ENCODE measurements at regions of chr1 and their contacts with region 1.

Region 1: DNA sequence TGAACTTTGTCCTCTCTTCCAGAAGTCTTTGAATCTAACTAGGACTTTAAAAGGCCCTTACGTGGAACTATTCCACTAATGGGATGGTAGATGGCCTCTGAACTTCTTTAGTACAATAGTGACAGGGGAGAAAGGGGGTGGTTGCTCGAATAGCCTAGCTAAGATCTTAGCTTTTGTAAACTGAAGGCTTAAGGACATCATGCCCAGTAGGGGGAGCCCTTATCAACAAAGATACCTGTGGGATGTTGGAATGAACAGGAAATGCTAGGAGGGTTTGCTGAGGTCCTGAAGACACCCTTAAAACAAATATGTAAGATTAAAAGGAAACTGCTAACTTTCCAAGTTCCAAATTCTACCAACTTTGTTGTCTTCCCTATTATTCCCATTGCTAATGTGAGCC is 33.2 kb downstream of the NHLH2 start:
- DNase-seq: peak; percentile 86
- H3K4me3 Mint-ChIP-seq: no peak overlapping the region
- H3K27ac Mint-ChIP-seq: no peak overlapping the region
- H3K4me1 Mint-ChIP-seq: no peaks in the 10 kb centered on the region
- H3K27me3 Mint-ChIP-seq: peaks cover 13% of the 10 kb centered on the region

Region 2: DNA sequence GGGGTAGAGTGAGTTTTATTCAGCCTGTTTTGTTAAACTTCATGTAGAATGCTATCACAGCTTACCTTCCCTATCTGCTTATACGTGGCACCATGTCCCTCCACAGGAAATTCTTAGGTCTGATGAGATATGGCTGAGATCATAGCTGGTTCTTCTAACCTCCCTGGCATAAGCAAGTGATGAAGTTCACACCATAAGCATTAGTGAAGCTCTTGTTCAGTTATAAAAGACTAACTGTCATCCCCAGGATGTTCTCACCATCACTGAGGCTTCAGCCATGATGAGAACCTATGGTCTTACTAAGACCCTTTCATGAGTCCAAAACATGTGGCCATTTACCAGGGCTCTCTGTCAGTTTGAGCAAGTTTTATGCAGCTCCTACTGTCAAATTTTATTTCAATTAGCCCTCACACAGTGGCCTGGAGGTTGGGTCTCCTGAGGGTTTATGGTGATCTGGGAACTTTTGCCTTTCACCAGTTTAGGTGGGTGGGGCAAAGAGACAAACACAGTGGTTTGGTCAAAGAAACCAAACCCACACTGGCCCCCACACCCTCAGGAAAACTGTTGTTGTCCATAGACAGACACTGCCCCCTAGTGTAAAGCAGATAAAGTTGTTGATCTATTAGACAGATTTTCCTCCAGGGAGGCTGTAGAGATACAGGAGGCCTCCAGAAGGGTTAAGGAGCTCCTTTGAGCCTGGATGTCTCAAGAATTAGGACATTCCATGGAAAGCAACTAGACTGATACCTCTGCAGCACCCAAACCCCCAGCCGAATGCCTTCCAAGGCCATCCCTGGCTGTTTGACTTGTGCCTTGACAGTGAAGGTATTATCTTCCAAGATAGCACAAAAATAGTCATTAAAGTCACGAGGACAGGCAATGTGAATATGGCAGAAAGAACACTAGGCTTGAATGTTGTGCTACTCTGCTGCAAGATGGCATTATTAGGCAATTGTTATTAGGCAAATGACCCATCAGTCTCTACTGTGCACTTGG is 173.6 kb after region 1 on chr1:
- intact Hi-C with region 1: loop called (anchors 1 kb)
- DNase-seq: peak; percentile 74
- H3K4me3 Mint-ChIP-seq: no peak overlapping the region
- H3K27ac Mint-ChIP-seq: no peak overlapping the region
- H3K4me1 Mint-ChIP-seq: peaks cover 3% of the 10 kb centered on the region
- H3K27me3 Mint-ChIP-seq: peaks cover 48% of the 10 kb centered on the region

Region 3: DNA sequence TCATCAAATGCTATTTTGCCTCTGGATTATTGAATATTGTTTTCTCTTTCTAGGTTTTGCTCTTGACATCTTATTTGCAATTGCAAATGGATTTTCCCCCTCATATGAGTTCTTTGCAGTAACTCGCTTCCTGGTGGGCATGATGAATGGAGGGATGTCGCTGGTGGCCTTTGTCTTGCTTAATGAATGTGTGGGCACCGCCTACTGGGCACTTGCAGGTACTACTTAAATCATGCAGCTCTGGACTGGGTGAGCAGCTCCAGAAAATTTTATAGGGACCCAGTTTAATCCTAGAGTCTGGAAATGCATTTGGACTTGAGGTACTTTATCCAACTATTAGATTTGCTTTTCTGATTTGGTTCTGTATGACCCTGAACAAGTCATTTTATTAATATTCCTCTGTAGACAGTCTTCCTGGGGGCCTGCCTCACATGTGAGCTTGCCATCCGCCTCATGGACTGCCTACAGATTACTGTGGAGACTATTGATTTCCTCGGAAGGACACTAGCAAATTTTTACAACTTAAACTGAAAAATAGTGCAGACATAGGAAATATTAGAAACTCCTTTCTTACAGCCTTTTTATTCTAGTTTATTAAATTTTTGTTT is 213.0 kb after region 1 on chr1:
- intact Hi-C with region 1: loop called (anchors 2 kb)
- DNase-seq: peak; percentile 82
- H3K4me3 Mint-ChIP-seq: no peak overlapping the region
- H3K27ac Mint-ChIP-seq: no peak overlapping the region
- H3K4me1 Mint-ChIP-seq: peaks cover 2% of the 10 kb centered on the region
- H3K27me3 Mint-ChIP-seq: peaks cover 22% of the 10 kb centered on the region

Region 4: DNA sequence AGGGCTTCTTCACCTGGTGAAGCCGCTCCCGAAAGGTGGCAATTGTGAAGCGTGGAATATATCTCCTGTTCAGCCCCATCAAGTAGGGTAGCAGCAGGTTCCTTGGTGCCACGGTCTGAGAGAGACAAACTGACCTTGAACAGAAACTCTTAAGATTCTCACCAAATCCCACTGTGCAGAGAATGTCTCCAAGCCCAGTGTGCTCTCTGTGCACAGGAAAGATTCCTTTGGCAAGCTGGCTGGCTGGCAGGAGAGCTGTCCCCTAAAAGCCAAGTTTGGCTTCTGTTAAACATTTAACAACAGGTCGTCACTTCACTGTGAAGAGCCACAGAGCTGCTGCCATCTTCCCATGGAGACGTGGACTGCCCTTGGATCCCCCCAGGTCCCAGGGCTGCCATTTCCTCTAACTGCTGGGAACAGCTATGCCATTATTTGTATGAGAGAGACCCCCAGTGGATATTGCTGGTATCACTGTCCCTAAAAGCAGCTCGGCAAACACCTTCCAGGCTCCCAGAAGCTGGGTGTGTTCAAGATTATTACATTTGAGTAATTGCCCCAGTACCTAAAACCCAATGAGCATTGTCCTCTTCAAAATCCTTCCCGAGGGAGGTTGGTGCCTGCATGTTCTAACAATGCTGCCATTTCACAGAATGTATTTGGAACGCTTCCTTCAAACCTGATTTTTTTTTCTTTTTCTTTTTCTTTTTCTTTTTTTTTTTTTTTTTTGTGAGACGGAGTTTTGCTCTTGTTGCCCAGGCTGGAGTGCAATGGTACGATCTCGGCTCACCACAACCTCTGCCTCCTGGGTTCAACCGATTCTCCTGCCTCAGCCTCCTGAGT is 691.3 kb after region 1 on chr1:
- intact Hi-C with region 1: loop called (anchors 5 kb)
- DNase-seq: peak; percentile 88
- H3K4me3 Mint-ChIP-seq: no peak overlapping the region
- H3K27ac Mint-ChIP-seq: no peak overlapping the region
- H3K4me1 Mint-ChIP-seq: peaks cover 47% of the 10 kb centered on the region
- H3K27me3 Mint-ChIP-seq: no peaks in the 10 kb centered on the region

Measured in activated CD4-positive, alpha-beta T cell treated with anti-CD3 and anti-CD28 coated beads, Interleukin-2, amount 10 ng/mL, durations not matched to agents 24 days and 14 days (primary cell).